Sigmoid colon (tissue), 7 donors: ENCODE measurements at regions of chr2 and their contacts with region 1.

Region 1: GRCh38 chr2:171893824-171894611 is at the start of gene SLC25A12:
- DNase-seq: peak; percentile 87
- H3K4me3 ChIP-seq: peak within 1 kb of the TSS; percentile 76 to 90 (median 82)
- H3K27ac ChIP-seq: peak within 1 kb of the TSS; percentile 82 to 85 (median 82)
- H3K4me1 ChIP-seq: peaks cover 0 to 38% (median 11%) of the 10 kb centered on the region in 4 donors
- H3K27me3 ChIP-seq: no peaks in the 10 kb centered on the region
- CTCF ChIP-seq: no peak
- EP300 ChIP-seq: no peak
- POLR2A ChIP-seq: peak in 1 of 2 donors; percentile 57
- total RNA-seq, gene SLC25A12: 53.5 to 77.8 (median 55.9) TPM

Region 2: GRCh38 chr2:171922230-171923022 is 28.4 kb after region 1 on chr2 and contains the start of gene HAT1:
- intact Hi-C with region 1: loop called (anchors 2 kb)
- DNase-seq: peak; percentile 99
- H3K4me3 ChIP-seq: peak within 1 kb of the TSS; percentile 80 to 93 (median 86)
- H3K27ac ChIP-seq: peak within 1 kb of the TSS; percentile 95 to 98 (median 98)
- H3K4me1 ChIP-seq: peaks cover 0 to 28% (median 22%) of the 10 kb centered on the region in 4 donors
- H3K27me3 ChIP-seq: no peaks in the 10 kb centered on the region
- CTCF ChIP-seq: no peak
- EP300 ChIP-seq: peak in 3 of 4 donors; percentile 0 to 44 (median 33)
- POLR2A ChIP-seq: peak; percentile 36 to 47
- total RNA-seq, gene HAT1: 25.5 to 41.0 (median 34.5) TPM

Region 3: GRCh38 chr2:171999604-172000469 is 105.8 kb after region 1 on chr2 and contains the start of gene METAP1D:
- intact Hi-C with region 1: loop called (anchors 5 kb)
- DNase-seq: peak; percentile 93
- H3K4me3 ChIP-seq: peak within 1 kb of the TSS; percentile 57 to 76 (median 62)
- H3K27ac ChIP-seq: peak within 1 kb of the TSS; percentile 47 to 65 (median 56)
- H3K4me1 ChIP-seq: peaks cover 0 to 13% (median 10%) of the 10 kb centered on the region in 4 donors
- H3K27me3 ChIP-seq: no peaks in the 10 kb centered on the region
- CTCF ChIP-seq: no peak
- EP300 ChIP-seq: no peak
- POLR2A ChIP-seq: no peak
- total RNA-seq, gene METAP1D: 7.8 to 14.4 (median 10.2) TPM

Region 4: GRCh38 chr2:172084734-172085459 is 190.9 kb after region 1 on chr2:
- intact Hi-C with region 1: loop called (anchors 10 kb)
- DNase-seq: peak; percentile 86
- H3K4me3 ChIP-seq: peak overlapping the region; percentile 15 to 50 (median 40)
- H3K27ac ChIP-seq: peak overlapping the region in 1 of 4 donors; percentile 16
- H3K4me1 ChIP-seq: peaks cover 0 to 56% (median 36%) of the 10 kb centered on the region in 4 donors
- H3K27me3 ChIP-seq: peaks cover 88 to 100% (median 99%) of the 10 kb centered on the region in 3 donors
- CTCF ChIP-seq: no peak
- EP300 ChIP-seq: no peak
- POLR2A ChIP-seq: peak in 1 of 2 donors; percentile 12